ENCODE measurements at regions of chr10 and their contacts with region 1.

Region 1: DNA sequence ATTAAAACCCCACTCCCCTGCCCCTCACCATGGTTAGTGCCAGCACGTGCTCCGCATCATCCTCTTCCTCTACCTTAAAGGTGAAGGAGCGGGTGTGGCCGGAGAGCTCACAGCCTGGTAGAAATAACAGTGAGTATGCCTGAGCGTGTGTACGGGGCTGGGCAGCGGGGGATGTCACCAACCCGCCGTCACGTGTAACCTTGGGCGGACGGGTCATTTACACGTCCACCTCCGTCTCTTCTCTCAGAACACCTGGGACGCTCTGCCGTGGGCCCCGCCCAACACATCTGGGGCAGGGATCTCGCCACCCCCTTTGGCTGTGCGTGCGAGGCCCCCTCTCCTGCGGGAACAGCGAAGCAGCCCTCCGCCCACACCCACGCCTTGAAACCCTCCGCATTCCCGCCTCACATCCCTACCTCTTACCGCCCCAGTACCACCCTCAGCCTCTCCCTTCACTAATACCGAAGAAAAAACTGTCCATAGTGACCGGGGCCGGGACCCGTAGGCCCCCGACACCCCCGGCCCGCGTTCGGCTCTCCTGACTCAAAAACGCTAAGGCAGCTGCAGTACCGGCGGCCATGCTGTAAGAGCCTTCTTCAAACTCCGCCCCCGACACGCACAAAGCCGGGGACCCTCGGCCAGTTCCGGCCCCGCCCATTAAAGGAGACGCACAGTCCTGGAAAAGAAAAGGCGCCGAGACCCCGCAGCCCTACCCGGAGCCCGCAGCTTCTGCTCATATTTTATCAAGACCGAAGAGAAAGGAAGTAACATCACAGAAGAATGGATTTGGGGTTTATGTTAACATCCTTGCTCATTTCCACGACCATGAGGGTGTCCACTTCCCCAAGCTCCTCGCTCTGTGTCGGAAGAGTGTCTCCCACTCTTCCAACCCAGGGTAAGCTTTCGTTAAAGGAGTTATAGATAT is at the start of gene NPM3:
- DNase-seq: peak; percentile 81 to 94
- ATAC-seq: peak; percentile 64 to 81
- H3K4me3 ChIP-seq: peak within 1 kb of the TSS; percentile 72
- H3K27ac ChIP-seq: peak within 1 kb of the TSS; percentile 84 to 93
- H3K4me1 ChIP-seq: peaks cover 32% of the 10 kb centered on the region
- CTCF ChIP-seq: no peak
- EP300 ChIP-seq: no peak
- POLR2A ChIP-seq: peak; percentile 51
- RAD21 ChIP-seq: no peak
- polyA plus RNA-seq, gene NPM3: 41.5 and 45.0 TPM in 2 replicates

Region 2: DNA sequence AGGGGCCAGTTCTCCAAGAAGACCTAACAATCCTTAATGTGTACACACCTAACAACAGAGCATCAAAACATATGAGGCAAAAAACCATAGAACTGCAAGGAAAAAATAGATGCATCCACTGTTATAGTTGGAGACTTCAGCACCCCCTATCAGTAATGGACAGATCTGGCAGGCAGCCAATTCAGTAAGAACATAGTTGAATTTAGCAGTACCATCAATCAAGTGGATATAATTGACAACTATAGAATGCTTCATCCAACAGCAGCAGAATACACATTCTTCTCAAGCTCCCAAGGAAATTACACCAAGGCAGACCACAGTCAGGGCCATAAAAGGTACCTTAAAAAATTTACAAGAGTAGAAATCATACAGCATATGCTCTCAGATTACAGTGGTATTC is 237.2 kb before region 1 on chr10:
- CTCF ChIA-PET with region 1: no interaction called
- POLR2A ChIA-PET with region 1: interaction called, 12 read pairs
- DNase-seq: no peak
- ATAC-seq: no peak
- H3K4me3 ChIP-seq: no peak overlapping the region
- H3K27ac ChIP-seq: no peak overlapping the region
- H3K4me1 ChIP-seq: no peaks in the 10 kb centered on the region
- CTCF ChIP-seq: no peak
- EP300 ChIP-seq: no peak
- POLR2A ChIP-seq: no peak
- RAD21 ChIP-seq: no peak

Region 3: DNA sequence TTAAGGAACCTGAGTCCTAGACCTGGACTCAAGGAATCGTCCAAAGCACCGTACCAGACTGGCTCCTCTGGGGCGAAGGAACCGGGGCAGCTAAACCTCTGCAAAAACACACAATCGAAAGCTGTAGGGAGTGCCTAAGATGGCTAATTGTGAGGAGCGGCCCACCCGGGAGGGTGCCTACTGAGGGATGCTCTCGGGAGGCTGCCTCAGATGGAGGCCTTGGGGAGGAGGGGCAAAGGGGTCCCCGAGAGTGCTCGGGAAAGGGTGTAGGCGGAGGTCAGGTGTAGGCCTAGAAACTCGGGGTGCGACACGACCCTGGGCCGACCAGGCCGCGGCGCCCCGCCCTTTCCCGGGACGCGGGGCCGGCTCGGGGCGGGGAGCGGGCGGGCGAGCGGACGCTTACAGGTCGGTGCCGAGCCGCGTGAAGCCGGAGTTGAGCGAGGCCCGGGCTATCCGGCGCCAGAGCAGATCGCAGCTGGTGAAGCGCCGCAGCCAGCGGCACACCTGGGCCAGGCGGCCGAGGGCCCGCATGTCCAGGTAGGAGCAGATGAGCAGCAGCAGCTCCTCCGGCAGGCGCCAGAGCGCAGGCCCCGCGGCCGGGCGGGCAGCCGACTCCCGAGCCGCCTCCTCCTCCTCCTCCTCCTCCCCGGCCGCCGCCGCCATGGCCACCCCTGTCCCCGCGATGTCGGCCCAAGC is 88.9 kb before region 1 on chr10:
- CTCF ChIA-PET with region 1: interaction called, 10 read pairs
- POLR2A ChIA-PET with region 1: no interaction called
- DNase-seq: peak; percentile 57 to 76
- ATAC-seq: peak; percentile 86 to 89
- H3K4me3 ChIP-seq: peak overlapping the region; percentile 90
- H3K27ac ChIP-seq: peak overlapping the region; percentile 95 to 99
- H3K4me1 ChIP-seq: peaks cover 16% of the 10 kb centered on the region; the same call in 2 of the 3 replicates
- CTCF ChIP-seq: no peak
- EP300 ChIP-seq: no peak
- POLR2A ChIP-seq: peak; percentile 36
- RAD21 ChIP-seq: no peak

Region 4: DNA sequence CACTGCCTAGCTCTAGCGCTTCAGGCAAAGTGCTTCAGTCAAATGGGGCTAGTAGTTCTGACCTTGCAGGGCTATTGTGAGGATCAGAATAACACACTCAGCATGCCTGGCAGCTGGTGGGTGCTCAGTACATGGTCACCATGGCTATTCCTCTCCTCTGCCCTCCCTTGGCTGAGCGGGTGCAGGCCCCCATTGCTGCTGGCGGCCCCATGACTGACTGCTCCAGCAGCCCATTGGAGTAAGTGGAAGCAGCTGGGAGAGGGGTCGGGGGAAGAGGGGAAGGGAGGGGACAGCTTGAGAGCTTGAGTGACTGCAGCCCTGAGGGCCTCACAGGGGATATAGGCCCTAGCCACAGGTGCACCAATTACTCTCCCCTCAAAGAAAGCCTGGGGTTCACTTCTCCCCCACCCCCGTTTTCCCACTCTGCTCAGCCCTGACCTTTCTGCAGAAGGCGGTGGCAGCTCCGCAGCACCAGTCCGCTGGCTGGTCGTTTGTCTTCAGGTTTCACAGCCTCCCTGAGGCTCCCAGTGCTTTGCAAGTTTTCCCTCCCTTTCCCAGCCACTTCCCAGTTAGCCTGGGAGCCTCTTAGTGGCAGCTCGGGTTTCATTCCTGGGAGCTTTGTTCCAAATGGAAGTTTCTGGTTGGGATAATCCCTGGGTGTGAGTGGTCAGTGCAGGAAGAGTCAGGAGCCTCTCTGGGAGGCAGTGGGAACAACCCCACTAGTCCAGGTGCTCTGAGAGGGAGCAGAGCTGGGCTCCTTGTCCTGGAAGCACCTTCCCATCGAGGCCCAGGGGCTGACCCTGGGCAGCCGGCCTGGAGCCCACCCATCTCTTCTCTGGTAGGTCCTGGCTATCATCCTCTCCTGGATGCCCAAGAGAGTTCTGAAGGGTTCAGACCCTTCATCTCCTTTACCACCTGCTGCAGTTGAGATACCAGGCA is 23.5 kb before region 1 on chr10:
- CTCF ChIA-PET with region 1: interaction called, 26 read pairs
- POLR2A ChIA-PET with region 1: no interaction called
- DNase-seq: no peak
- ATAC-seq: no peak
- H3K4me3 ChIP-seq: no peak overlapping the region
- H3K27ac ChIP-seq: no peak overlapping the region
- H3K4me1 ChIP-seq: no peaks in the 10 kb centered on the region
- CTCF ChIP-seq: no peak
- EP300 ChIP-seq: no peak
- POLR2A ChIP-seq: no peak
- RAD21 ChIP-seq: no peak

Region 5: DNA sequence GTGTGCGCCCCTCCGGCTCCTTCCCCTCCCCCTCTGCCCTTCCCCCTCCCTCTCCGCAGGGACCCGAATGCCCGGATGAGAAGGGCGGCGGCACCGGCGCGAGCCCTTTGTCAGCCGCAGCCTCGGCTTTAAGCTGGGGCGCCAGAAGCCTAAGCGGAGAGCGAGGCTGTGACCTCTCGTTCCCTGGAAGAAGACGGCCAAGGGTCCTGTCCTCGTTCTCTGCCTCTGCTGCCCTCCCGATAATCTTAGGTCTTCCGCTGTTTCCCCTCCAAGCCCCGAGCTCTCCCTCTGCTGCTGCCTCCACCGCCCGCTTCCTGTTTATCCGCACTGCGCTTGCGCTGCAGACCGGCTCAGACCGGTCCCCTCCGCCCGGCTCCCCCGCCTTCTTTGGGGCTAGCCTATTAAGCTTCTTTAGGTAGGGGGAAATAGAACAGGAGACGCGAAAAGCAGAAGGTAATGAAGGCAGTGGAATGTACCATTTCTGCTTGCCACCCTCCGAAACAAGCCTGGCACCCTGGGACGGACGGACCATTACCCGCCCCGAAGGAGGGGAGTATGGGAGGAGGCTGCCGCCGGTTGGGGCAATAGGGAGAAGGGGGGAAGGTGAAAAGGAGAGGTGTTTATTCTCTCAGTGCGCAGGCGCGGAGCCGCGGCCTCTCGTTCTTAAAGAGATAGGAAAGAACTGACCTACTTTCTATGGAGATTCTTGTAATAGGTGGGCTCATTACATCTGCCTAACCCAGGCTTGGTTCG is 35.2 kb after region 1 on chr10 and contains the start of gene OGA:
- CTCF ChIA-PET with region 1: interaction called, 10 read pairs
- POLR2A ChIA-PET with region 1: interaction called, 24 read pairs
- DNase-seq: peak; percentile 97 to 100
- ATAC-seq: peak; percentile 87 to 94
- H3K4me3 ChIP-seq: peak within 1 kb of the TSS; percentile 96
- H3K27ac ChIP-seq: peak within 1 kb of the TSS; percentile 95 to 97
- H3K4me1 ChIP-seq: peaks cover 30% of the 10 kb centered on the region
- CTCF ChIP-seq: no peak
- EP300 ChIP-seq: no peak
- POLR2A ChIP-seq: peak; percentile 86
- RAD21 ChIP-seq: no peak
- polyA plus RNA-seq, gene OGA: 79.1 and 84.5 TPM in 2 replicates

Region 6: DNA sequence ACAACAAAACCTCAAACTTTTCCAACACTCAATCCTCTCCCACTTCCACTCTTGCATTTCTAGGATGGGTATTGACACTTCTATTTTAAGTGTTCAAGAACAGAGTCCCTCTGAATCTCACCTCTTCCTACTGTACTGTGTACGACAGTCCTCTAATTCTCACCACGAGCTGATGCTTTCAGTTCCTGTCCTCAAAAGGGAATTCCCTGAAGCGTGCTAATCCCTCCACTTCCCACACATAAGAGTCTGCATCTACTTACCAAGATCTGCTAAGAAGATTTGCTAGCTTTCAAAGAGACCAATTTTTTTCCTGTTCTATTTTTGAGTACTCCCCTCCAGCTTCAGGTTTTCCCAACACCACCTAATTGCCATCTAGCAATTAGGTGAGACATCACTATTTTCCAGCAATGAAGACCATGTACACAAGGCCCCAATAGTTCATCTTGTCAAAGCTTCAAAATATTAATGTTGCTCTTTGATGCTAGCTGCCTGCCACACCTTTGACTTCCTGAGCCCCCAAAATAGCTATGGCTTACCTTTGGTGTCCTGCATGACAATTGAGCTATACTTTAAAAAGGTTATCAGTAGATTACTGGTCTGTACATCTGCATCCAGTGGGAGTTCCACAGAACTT is 218.5 kb after region 1 on chr10:
- CTCF ChIA-PET with region 1: no interaction called
- POLR2A ChIA-PET with region 1: no interaction called
- DNase-seq: no peak
- ATAC-seq: no peak
- H3K4me3 ChIP-seq: no peak overlapping the region
- H3K27ac ChIP-seq: no peak overlapping the region
- H3K4me1 ChIP-seq: no peaks in the 10 kb centered on the region; the same call in 2 of the 3 replicates
- CTCF ChIP-seq: no peak
- EP300 ChIP-seq: no peak
- POLR2A ChIP-seq: no peak
- RAD21 ChIP-seq: no peak

Measured in A549 (cell line).